HEK293T (cell line): ENCODE measurements at regions of chr11 and their contacts with region 1.

Region 1: DNA sequence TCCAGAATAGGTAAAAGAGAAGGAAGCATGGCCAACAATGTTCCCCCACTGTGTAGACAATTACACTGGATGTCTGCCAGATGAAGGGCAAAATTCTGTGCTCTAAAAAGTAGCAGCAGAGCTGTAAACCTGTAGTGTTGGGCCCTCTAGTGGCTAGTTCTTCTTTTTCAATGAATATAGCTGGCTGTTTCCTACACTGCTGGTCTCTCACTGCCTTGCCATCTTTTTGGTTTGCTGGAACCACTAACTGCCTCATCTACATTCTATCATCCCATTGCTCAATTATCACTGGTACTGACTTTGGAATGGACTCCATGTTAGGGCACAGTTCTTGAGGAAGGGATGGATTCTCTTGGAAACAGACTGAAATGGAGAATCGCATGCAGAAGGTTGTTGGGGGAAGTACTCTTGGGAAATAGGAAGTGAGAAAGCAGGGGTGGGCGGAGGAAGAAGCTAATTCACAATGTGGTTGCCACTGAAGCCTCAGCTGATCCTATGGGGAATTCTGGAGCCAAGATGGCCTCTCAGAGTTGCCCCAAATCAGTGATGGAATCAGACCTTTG is 17.9 kb downstream of the KCNE3 start:
- DNase-seq: peak; percentile 69

Region 2: GRCh38 chr11:74255741-74256369 is 193.6 kb before region 1 on chr11:
- CTCF ChIA-PET with region 1: interaction called, 39 read pairs
- POLR2A ChIA-PET with region 1: no interaction called
- DNase-seq: peak; percentile 73

Region 3: GRCh38 chr11:74388678-74389327 is 60.6 kb before region 1 on chr11:
- CTCF ChIA-PET with region 1: interaction called, 23 read pairs
- POLR2A ChIA-PET with region 1: interaction called, 5 read pairs
- DNase-seq: peak; percentile 34

Region 4: DNA sequence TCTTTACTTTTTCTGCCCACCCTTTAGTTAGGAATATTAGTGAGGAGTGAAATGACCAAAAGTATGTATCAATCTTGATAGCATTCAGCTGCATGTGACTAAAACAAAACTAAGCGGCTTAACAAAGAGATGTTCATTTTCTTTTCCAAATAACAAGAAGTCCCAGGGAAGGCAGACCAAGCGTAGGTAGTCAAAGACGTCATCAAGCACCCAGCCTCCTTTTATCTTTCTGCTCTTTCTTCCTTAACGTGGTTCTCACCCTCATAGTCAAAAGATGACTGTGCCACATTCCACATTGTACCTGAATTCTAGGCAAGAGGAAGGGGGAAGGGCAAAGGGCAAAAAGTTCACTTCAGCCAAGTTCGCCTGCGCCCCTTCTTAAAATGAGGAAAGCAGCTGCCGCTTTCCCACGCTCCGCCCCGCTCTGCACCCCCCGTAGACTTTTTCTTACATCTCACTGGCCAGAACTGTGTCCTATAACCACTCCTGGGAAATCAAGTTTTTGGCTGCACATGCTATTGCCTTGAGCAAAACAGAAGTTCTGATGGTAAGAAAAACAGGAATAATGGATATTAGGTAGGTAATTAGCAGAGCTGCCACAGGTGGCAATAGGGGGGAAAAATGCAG is 36.6 kb before region 1 on chr11:
- CTCF ChIA-PET with region 1: no interaction called
- POLR2A ChIA-PET with region 1: no interaction called
- DNase-seq: no peak

Region 5: GRCh38 chr11:74462009-74462408 is 12.6 kb after region 1 on chr11:
- CTCF ChIA-PET with region 1: interaction called, 14 read pairs
- POLR2A ChIA-PET with region 1: no interaction called
- DNase-seq: no peak

Region 6: GRCh38 chr11:74473382-74474173 is 24.1 kb after region 1 on chr11:
- CTCF ChIA-PET with region 1: no interaction called
- POLR2A ChIA-PET with region 1: no interaction called
- DNase-seq: no peak

Region 7: GRCh38 chr11:74532501-74533246 is 83.2 kb after region 1 on chr11:
- CTCF ChIA-PET with region 1: no interaction called
- POLR2A ChIA-PET with region 1: no interaction called
- DNase-seq: no peak

Region 8: DNA sequence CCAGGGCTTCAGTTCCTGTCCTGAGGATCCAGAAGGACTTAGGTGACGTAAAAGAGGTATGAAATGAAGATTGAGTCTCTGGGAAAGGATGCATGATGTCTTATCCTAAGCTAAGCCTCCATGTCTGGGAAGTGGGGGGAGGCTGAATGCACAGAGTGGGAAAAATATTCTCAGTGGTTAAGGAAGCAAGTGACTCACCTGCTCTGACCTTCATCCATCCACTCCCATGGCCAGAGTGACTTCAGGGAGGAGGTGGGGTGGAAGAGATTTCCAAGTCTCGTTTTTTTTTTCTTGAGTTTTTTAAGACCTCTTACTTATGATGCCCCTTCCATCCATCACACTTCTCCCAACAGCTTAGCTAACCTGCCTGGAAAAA is 110.5 kb after region 1 on chr11:
- CTCF ChIA-PET with region 1: no interaction called
- POLR2A ChIA-PET with region 1: no interaction called
- DNase-seq: no peak

Region 9: GRCh38 chr11:74570266-74571061 is 121.0 kb after region 1 on chr11:
- CTCF ChIA-PET with region 1: interaction called, 40 read pairs
- POLR2A ChIA-PET with region 1: interaction called, 3 read pairs
- DNase-seq: peak; percentile 72